Motor neuron (in vitro differentiated cells): ENCODE measurements at regions of chr17 and their contacts with region 1.

Region 1: DNA sequence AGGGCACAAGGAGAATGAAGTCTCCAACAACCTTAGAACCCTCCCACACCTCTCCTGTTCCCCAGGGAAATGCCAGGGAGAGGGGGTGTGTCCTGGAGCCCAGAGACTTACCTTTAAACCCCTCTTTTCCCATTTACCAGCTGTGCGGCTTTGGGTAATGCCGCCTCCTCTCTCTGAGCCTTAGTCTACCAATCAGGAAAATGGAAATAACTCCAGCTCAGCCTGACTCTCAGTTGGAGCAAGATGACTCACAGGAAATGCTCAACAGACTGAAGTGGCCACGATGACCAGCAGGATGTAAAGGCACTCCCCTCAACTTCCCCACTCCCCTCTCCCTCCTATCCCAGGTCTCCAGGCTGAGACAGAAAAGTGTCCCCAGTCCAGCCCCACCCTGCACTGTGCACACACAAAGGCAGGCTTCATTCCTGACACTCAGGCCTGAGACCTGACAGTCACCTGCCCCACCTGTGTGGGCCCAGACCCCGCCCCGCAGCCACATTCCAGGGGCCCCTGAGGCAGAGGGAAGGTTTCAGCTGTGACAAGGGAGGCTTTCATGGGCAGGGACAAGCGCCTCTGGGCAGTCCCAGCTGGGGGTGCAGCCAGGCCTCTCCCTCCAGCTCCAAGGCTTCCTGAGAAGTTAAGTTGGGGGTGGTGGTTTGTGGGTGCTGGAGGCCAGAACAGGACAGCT is 3.0 kb upstream of the KRT15 start:
- ATAC-seq: peak in 2 of 8 experiments; percentile 82 to 86
- H3K4me3 ChIP-seq: no peak overlapping the region
- H3K27ac ChIP-seq: no peak overlapping the region
- H3K4me1 ChIP-seq: no peaks in the 10 kb centered on the region

Region 2: GRCh38 chr17:41329281-41329948 is 192.3 kb before region 1 on chr17:
- in situ Hi-C with region 1: loop called in 1 of 9 experiments (anchors 25 kb)
- ATAC-seq: peak; percentile 73 to 96 (median 82)
- H3K4me3 ChIP-seq: no peak overlapping the region
- H3K27ac ChIP-seq: no peak overlapping the region
- H3K4me1 ChIP-seq: no peaks in the 10 kb centered on the region

Region 3: GRCh38 chr17:41403798-41404671 is 117.7 kb before region 1 on chr17:
- in situ Hi-C with region 1: loop called in 1 of 9 experiments (anchors 25 kb)
- ATAC-seq: peak; percentile 41 to 95 (median 91)
- H3K4me3 ChIP-seq: no peak overlapping the region
- H3K27ac ChIP-seq: no peak overlapping the region
- H3K4me1 ChIP-seq: peaks cover 0 to 7% of the 10 kb centered on the region in 2 donors

Region 4: GRCh38 chr17:41434415-41434814 is 87.3 kb before region 1 on chr17:
- in situ Hi-C with region 1: no loop called
- ATAC-seq: peak in 4 of 8 experiments; percentile 7 to 20 (median 10)
- H3K4me3 ChIP-seq: no peak overlapping the region
- H3K27ac ChIP-seq: no peak overlapping the region
- H3K4me1 ChIP-seq: peaks cover 12 to 16% of the 10 kb centered on the region in 2 donors